AG04450 (cell line): ENCODE measurements at regions of chr3 and their contacts with region 1.

Region 1: GRCh38 chr3:69806735-69807438 is 67.6 kb downstream of the MITF start:
- DNase-seq: no peak
- H3K4me3 ChIP-seq: no peak overlapping the region
- H3K27ac ChIP-seq: peak overlapping the region; percentile 86
- H3K27me3 ChIP-seq: no peaks in the 10 kb centered on the region
- CTCF ChIP-seq: no peak

Region 2: GRCh38 chr3:69324362-69325025 is 482.4 kb before region 1 on chr3:
- CTCF ChIA-PET with region 1: interaction called, 11 read pairs
- POLR2A ChIA-PET with region 1: no interaction called
- DNase-seq: no peak
- H3K4me3 ChIP-seq: no peak overlapping the region
- H3K27ac ChIP-seq: no peak overlapping the region
- H3K27me3 ChIP-seq: peaks cover 3% of the 10 kb centered on the region
- CTCF ChIP-seq: no peak

Region 3: DNA sequence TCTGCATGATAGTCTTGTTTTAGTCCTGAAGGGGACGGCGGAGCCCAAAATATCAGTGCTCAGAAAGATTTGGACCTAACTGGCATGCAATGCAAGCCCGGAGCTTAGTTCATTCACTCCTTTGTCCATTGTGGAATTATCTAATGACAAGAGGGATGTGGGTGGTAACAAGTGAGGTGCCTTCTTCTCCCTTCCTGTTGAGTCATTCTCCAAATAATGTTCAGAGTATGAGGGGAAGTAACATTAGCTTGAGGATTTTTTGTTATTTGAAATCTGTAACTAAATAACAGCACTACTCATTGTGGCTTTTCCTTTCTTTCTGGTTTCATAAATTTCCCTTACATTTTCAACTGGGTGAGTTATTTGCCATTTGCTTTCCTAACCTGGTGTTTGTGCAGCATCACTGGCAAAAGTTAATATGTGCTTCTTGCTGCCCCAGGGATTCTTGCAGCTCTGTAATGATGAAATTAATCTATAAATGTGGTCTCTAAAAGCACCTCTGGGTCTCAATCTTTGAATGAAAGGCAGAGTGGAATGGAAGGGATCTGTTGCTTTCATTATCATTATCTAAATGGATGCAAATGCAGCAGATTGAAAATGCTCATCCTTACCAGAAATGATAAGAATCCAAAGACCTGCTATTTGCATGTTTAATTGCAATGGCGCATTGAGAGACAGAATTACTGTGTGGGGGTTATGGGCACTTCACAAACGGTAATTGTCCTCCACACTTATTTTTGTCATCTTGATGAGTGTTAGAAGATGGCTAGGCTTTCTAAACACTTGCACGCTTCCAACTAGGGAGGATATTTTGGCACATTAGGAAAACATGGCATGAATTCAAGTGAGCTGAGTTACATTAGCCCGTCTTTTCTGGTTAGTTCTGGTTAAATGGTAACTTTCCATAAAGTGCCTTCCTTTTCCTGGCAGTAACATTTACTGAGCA is 157.5 kb before region 1 on chr3:
- CTCF ChIA-PET with region 1: no interaction called
- POLR2A ChIA-PET with region 1: no interaction called
- DNase-seq: no peak
- H3K4me3 ChIP-seq: no peak overlapping the region
- H3K27ac ChIP-seq: no peak overlapping the region
- H3K27me3 ChIP-seq: no peaks in the 10 kb centered on the region
- CTCF ChIP-seq: no peak

Region 4: GRCh38 chr3:69865920-69866679 is 59.2 kb after region 1 on chr3:
- CTCF ChIA-PET with region 1: no interaction called
- POLR2A ChIA-PET with region 1: interaction called, 11 read pairs
- DNase-seq: no peak
- H3K4me3 ChIP-seq: peak overlapping the region; percentile 33
- H3K27ac ChIP-seq: peak overlapping the region; percentile 77
- H3K27me3 ChIP-seq: no peaks in the 10 kb centered on the region
- CTCF ChIP-seq: no peak